WTC11 (cell line): ENCODE measurements at regions of chr6 and their contacts with region 1.

Region 1: GRCh38 chr6:159217595-159218275 is 48.5 kb downstream of the FNDC1 start:
- DNase-seq: peak; percentile 80
- ATAC-seq: peak; percentile 94
- H3K4me3 Mint-ChIP-seq: no peak overlapping the region
- H3K27ac Mint-ChIP-seq: peak overlapping the region; percentile 21; the same call in 1 of the 2 replicates
- H3K4me1 Mint-ChIP-seq: peaks cover 23% of the 10 kb centered on the region
- H3K27me3 Mint-ChIP-seq: no peaks in the 10 kb centered on the region
- CTCF ChIP-seq: 0 out of 2 replicates have a peak, but pooled peaks have one; percentile 14

Region 2: GRCh38 chr6:158938811-158939254 is 278.9 kb before region 1 on chr6:
- CTCF ChIA-PET with region 1: no interaction called
- POLR2A ChIA-PET with region 1: no interaction called
- DNase-seq: peak; percentile 31
- ATAC-seq: peak; percentile 55
- H3K4me3 Mint-ChIP-seq: peak overlapping the region; percentile 64
- H3K27ac Mint-ChIP-seq: no peak overlapping the region
- H3K4me1 Mint-ChIP-seq: peaks cover 24% of the 10 kb centered on the region
- H3K27me3 Mint-ChIP-seq: peaks cover 13% of the 10 kb centered on the region
- CTCF ChIP-seq: no peak

Region 3: DNA sequence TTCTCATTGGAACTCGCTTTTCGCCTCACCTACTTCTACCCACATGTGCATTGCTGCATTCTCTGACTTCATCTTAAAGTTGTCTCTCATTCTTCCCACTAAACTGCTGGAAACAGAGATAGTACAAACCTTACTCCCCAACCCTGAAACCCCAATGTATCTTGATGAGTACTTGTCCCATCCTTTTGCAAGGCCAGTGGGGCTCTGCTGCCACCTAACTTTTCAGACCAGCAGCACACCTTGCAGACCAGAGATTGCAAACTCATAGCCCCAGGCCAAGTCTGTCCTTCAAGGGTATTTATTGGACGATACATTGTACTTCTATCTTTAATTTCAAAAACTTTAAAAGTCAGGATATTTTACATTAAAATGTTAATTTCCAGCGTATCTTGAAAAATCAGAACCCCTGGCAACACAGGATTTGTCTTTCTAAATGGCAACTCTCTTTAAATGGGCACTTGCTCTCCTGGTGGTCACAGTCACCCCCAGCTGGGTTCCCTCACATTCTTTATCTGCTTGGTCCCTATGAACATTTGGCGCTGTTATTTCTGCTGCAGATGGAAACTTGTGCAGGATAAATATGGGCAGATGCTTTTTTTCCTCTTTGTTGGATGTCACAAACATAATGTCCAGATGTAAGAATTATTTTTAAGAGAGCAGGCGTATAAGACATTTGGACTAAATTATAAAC is 391.4 kb after region 1 on chr6:
- CTCF ChIA-PET with region 1: interaction called, 17 read pairs
- POLR2A ChIA-PET with region 1: no interaction called
- DNase-seq: peak; percentile 70
- ATAC-seq: peak; percentile 96
- H3K4me3 Mint-ChIP-seq: no peak overlapping the region
- H3K27ac Mint-ChIP-seq: no peak overlapping the region
- H3K4me1 Mint-ChIP-seq: no peaks in the 10 kb centered on the region
- H3K27me3 Mint-ChIP-seq: no peaks in the 10 kb centered on the region
- CTCF ChIP-seq: peak; percentile 47; the same call in 1 of the 2 replicates